Left colon (tissue), 2 donors: ENCODE measurements at regions of chr10 and their contacts with region 1.

Region 1: DNA sequence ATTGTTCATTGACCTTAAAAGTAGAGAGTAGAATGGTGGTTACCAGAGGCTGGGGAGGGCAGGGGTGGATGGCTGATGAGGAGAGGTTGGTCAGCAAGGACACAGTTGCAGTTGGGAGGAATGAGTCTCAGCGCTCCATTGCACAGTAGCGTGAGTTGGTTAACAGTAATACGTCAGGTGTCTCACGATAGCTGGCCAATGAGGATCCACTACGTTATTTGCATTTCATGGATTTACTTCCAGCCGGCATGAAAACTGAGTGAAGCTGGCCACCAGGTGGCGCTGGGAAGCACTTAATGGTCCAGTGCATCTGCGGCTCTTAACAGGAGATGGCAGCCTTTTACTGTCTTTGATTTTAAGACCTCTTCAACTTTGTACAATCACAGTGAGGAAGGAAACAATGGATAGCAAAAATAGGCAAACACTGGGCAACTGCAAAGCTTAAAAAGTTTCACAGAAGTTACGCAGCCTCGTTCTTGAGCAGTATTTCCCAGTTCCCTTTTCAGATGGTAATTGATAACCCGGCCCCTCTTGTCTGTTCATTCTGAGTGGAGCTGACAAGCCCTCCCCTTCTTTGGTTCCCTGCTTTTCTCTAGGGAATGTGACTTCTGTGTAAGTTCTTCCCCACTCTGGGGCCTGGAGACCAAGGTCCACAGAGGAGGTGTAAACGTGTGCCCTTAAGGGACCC is 23.7 kb downstream of the AKR1E2 start:
- DNase-seq: peak; percentile 85 to 93
- ATAC-seq: peak; percentile 96

Region 2: DNA sequence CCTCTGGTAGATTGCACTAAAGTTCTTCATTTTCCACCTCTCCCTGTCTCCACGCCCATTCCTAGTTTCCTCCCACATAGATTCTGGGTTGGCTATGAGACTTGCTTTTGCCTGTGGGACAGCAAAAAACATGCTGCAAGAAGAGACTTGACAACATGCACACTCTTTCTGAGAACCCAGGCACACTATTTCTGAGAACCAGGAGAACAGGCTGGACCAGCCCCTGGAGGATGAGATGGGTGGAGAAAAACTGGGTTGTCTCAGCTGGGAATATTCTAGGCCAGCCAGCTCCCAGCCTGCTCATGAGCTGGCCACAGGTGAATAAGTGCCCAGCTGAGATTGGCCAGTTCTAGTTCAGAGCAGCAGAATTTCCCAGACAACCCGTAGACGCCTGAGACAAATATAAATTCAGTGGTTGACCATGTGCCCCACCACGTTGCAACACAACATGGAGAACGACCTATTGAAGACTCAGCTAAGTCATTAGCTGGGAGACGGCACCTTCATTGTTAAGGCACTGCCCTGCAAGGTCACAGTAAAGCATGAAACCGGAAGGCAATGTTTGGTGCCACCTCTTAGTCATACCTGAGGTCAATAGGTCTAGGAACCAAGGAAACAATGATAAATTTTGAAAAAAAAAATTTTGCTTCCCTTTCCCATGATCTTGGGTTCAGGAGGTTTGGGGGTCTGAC is 116.4 kb before region 1 on chr10:
- intact Hi-C with region 1: no loop called
- DNase-seq: no peak
- ATAC-seq: no peak

Region 3: GRCh38 chr10:4953405-4953804 is 103.7 kb after region 1 on chr10:
- intact Hi-C with region 1: no loop called
- DNase-seq: no peak
- ATAC-seq: no peak

Region 4: DNA sequence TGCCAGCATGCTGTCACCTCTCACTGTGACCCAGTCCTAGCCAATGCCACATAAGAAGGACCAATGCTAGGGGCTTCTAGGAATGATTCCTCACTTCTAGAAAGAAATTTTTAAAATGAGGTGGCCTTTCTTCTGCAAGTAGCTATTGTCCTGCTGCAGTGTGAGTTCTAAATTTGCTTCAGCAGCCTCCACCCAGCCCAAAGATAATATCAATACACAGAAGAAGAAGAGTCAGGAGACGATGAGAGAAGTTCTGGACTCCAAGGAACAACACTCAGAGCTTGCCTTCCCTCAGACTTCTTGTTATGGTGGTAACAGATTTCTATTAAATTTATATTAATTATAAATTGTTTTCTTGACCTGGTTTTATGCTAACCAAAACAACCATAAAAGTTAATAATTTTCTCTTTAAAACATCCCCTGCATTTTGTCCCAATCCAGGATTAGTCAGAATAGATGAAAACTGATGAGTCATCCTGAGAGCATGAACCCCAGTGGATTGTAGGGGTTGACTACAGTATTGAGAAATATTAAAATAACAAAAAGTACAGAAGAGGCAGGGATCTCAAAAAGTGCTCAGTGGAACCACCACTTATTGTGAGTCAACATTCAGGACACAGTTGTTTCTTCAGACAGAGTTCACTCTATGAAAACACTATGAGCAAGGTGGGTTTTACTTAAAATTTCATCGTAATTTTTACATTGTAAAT is 183.5 kb after region 1 on chr10:
- intact Hi-C with region 1: no loop called
- DNase-seq: no peak
- ATAC-seq: no peak

Region 5: DNA sequence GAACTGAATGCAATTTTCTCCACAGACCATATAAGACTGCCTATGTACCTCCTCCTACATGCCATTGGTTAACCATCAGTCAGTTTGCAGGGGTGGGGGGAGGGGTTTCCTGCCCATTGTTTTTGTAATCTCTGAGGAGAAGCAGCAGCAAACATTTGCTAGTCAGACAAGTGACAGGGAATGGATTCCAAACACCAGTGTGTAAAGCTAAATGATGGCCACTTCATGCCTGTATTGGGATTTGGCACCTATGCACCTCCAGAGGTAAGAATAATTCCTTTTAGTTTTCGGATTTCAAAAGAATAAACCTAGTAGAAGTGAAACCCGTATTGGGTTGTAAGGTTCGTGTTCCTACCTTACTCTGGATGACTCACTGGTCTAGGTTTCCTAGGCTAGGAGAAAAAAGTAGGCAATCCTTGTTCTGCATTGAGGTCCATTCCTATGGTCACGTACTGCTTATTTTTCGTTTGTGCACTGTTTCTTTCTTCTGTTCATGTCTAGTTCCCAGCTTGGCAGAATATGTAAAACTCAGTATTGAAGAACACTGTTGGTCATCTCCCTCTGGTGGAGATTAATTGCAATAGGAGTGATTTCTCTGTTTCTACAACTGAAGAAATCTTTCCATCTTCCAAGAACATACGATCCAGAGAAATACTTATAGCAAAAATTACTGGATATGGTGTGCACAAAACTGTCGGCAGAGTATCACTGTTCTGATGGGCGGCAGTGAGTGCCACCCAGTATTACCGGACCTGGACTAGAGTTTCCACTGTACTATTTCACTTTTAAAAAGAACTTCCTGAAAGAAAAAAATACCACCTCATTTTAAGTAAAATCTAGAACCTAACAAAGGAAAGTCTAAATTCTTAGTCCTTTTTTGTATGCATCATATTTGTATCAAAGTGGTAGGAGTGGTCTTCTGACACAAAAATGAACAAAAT is 244.8 kb after region 1 on chr10 and contains the start of gene AKR1C3:
- intact Hi-C with region 1: loop called in 1 of 2 experiments (anchors 5 kb)
- DNase-seq: no peak
- ATAC-seq: peak; percentile 83
- total RNA-seq, gene AKR1C3: 173 to 682 TPM

Region 6: DNA sequence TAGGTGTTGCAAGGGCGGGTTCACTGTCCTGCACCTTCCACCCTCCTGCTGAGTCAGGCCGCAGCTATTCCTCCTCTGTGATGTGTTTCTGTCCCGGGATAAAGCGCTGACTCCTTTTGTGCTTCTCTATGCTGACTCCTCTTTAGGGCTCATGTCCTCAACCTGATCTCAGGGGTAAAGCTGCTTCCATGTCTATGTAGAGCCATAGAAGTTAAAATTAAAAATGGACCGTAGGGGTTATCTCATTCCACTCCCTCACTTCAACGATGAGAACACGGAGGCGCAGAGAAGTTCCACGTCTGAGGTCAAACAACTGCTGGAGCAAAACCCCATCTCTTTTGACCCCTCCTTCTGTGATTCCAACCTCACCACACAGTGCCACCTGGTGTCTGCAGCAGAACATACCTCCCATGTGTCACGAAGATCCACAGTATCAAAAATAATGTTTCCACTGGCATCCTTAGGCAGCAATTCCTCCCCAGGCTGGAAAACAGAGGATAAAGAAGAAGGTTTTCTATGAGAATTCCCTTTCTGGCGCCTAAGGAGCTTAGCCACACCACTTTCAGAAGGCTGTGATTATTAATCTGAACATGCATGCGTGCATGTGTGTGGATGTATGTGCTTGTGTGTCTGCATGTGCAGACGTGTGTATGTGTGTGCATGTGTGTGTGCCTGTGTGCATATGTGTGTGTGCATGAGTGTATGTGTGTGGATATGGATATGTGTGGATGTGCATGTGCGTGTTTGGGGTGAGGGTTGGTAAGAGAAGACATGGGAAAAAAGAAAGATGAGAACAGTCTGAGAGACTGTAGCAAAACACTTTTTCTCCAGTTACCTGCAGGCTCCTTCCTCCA is 433.8 kb after region 1 on chr10:
- intact Hi-C with region 1: loop called in 1 of 2 experiments (anchors 5 kb)
- DNase-seq: peak; percentile 56 to 74
- ATAC-seq: peak; percentile 97

Region 7: DNA sequence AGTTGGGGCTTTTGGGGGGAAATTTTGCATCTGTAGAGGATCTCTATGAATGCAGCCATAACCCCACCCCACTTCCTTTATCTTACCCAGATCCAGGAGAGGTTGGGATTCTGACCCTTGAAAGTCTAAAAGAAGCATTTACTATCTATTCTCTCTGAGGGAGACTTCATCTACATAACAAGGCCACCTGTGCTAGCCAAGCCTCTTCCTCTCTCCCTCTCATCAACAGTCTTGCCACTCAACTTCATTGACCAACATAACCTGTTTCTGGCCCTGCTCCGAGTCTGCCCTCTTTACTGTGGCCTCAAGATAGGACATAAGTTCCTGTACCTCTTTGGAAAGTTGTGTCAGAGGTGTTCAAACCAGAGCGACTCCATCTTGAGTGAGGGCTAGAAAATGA is 535.5 kb after region 1 on chr10:
- intact Hi-C with region 1: loop called in 1 of 2 experiments (anchors 10 kb)
- DNase-seq: no peak
- ATAC-seq: no peak